WTC11 (cell line): ENCODE measurements at regions of chr19 and their contacts with region 1.

Region 1: DNA sequence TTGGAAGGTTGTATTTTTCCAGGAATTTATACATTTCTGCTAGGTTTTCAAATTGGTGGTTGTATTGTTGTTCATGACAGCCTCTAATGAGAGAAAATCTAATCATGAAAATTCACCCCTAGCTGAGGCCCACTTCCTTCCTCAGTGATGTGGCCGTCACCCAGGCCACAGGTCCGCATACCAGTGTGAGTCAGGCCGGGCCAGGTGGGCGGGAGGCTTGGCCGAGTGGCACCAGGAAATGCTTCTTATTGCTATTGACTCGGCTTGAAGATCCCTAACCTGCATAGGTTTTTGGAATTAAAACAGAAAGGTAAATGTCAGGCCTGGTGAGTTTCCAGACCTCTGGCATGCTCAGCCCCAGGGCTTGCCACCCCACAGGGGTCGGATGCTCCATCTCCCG is 88.7 kb downstream of the SCGB2B2 start:
- DNase-seq: no peak
- ATAC-seq: no peak
- H3K4me3 Mint-ChIP-seq: no peak overlapping the region
- H3K27ac Mint-ChIP-seq: no peak overlapping the region
- H3K4me1 Mint-ChIP-seq: peaks cover 6% of the 10 kb centered on the region
- H3K27me3 Mint-ChIP-seq: peaks cover 18% of the 10 kb centered on the region
- CTCF ChIP-seq: no peak

Region 2: DNA sequence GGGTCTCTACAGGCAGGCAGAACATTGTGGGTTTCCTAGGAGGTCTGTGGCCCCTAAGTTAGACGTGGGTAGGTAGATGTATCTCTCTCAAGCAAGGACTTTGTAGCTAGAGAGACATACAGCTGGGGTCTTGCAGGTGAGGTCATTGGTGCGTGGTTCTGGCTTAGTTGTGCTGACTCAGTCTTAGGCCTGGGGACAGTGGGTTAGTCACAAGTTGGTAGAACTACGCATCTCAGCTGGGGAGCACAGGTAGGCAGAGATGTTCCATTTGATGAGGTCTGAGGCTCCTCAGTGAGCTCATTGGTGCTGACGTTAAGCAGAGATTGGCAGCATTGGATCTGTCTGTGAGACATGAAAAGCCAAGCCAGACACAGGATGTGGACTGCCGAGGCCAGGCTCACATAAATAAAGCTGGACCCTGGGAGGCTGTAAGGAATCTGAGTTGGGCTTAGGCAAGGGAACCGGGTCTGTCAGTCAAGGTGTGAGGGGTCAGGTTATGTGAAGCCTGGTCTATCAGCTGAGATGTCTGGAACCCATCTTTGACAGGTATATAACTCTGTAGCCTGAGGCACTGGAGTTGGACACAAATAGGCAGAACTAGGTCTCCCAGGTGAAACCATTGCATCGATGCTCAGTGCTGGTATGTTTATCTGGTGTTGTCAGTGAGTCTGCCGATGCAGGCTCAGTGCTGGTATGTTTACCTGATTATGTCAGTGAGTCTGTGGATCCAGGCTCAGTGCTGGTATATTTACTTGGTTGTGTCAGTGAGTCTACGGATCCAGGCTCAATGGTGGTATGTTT is 201.4 kb before region 1 on chr19:
- CTCF ChIA-PET with region 1: no interaction called
- POLR2A ChIA-PET with region 1: interaction called, 13 read pairs
- DNase-seq: no peak
- ATAC-seq: no peak
- H3K4me3 Mint-ChIP-seq: no peak overlapping the region
- H3K27ac Mint-ChIP-seq: no peak overlapping the region
- H3K4me1 Mint-ChIP-seq: no peaks in the 10 kb centered on the region
- H3K27me3 Mint-ChIP-seq: no peaks in the 10 kb centered on the region
- CTCF ChIP-seq: no peak

Region 3: GRCh38 chr19:34677386-34678084 is 89.3 kb after region 1 on chr19 and contains the start of gene ZNF302:
- CTCF ChIA-PET with region 1: no interaction called
- POLR2A ChIA-PET with region 1: no interaction called
- DNase-seq: peak; percentile 98
- ATAC-seq: peak; percentile 96
- H3K4me3 Mint-ChIP-seq: peak within 1 kb of the TSS; percentile 99
- H3K27ac Mint-ChIP-seq: peak within 1 kb of the TSS; percentile 97
- H3K4me1 Mint-ChIP-seq: peaks cover 19% of the 10 kb centered on the region
- H3K27me3 Mint-ChIP-seq: peaks cover 21% of the 10 kb centered on the region
- CTCF ChIP-seq: no peak
- total RNA-seq, gene ZNF302: 23.5 to 26.3 TPM (median 24.6 TPM) in 3 replicates